CD14-positive monocyte (primary cell): ENCODE measurements at regions of chr7 and their contacts with region 1.

Region 1: DNA sequence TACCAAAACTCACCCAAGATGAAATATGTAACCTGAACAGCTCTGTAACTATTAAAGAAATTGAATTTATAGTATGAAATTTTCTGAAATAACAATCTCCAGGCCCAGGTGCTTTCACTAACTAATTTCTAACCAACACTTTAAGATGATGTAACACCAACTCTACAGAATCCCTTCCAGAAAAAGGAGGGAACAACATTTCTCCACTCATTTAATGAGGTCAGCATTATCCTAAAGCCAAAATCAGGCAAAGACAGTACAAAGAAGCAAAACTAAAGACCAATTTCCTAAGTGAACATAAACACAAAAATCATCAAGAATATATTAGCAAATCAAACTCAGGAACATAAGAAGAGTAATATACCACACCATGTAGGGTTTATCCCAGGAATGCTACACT is 65.5 kb downstream of the KMT2C start:
- DNase-seq: no peak
- H3K4me3 ChIP-seq: no peak overlapping the region
- H3K4me3 Mint-ChIP-seq: no peak overlapping the region
- H3K27ac ChIP-seq: no peak overlapping the region
- H3K27ac Mint-ChIP-seq: peak overlapping the region in 1 of 7 donors; percentile 16
- H3K4me1 ChIP-seq: peaks cover 0 to 13% of the 10 kb centered on the region in 2 donors
- H3K4me1 Mint-ChIP-seq: peaks cover 29% of the 10 kb centered on the region
- H3K27me3 ChIP-seq: no peaks in the 10 kb centered on the region
- H3K27me3 Mint-ChIP-seq: no peaks in the 10 kb centered on the region
- CTCF ChIP-seq: no peak

Region 2: GRCh38 chr7:152424348-152425108 is 54.2 kb after region 1 on chr7:
- intact Hi-C with region 1: loop called in 1 of 2 experiments (anchors 10 kb)
- DNase-seq: no peak
- H3K4me3 ChIP-seq: no peak overlapping the region
- H3K4me3 Mint-ChIP-seq: no peak overlapping the region
- H3K27ac ChIP-seq: peak overlapping the region in 1 of 2 donors; percentile 49
- H3K27ac Mint-ChIP-seq: peak overlapping the region in 6 of 7 donors; percentile 23 to 74 (median 67)
- H3K4me1 ChIP-seq: peaks cover 19 to 50% of the 10 kb centered on the region in 2 donors
- H3K4me1 Mint-ChIP-seq: peaks cover 59% of the 10 kb centered on the region
- H3K27me3 ChIP-seq: no peaks in the 10 kb centered on the region
- H3K27me3 Mint-ChIP-seq: peaks cover 0 to under 1% (median 0%) of the 10 kb centered on the region in 3 donors
- CTCF ChIP-seq: no peak